ENCODE measurements at regions of chr4 and their contacts with region 1.

Region 1: DNA sequence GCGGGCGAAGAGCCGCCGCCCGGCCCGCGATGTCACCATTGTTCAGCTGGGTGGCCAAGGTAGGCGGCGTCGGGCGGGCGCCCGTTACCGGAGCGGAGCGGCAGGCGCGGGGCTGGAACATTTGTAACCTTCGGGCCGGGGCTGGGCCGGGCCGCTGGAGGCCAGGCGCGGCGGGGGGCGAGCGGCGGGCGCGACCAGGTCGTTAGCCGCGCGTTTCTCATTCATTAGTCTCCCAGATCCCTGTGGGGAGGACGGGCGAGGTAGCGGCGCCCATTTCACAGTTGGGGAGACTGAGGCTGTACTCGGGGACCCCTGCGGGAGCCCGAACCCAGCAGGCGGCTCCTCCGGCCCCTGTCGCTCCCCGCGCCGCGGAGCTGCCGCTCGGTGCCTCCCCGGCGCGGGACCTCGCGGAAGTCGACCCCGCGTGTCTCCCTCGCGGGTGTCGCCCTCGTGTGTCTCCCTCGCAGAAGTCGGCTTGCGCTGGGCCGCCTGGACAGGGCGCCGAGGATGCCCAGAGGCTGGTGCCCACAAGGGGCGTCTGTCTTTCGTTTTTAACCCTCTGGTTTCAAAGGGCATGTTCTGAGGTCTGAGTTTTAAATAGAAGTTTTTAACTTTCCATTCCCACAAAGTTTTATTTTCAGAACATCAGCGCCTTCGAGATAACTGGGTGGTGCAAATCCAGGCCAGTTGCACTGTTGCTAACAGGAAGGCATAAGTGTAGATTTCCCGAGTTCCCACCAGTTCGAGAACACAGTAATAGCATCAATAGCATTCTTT is 17.5 kb downstream of the PTTG2 start:
- DNase-seq: peak; percentile 51 to 65
- H3K4me3 ChIP-seq: peak overlapping the region; percentile 54
- H3K4me3 Mint-ChIP-seq: peak overlapping the region; percentile 71
- H3K27ac Mint-ChIP-seq: no peak overlapping the region
- H3K4me1 ChIP-seq: peaks cover 15% of the 10 kb centered on the region; the same call in 1 of the 2 replicates
- H3K4me1 Mint-ChIP-seq: peaks cover 12% of the 10 kb centered on the region
- H3K27me3 ChIP-seq: no peaks in the 10 kb centered on the region
- H3K27me3 Mint-ChIP-seq: no peaks in the 10 kb centered on the region
- CTCF ChIP-seq: peak; percentile 23 to 64

Region 2: DNA sequence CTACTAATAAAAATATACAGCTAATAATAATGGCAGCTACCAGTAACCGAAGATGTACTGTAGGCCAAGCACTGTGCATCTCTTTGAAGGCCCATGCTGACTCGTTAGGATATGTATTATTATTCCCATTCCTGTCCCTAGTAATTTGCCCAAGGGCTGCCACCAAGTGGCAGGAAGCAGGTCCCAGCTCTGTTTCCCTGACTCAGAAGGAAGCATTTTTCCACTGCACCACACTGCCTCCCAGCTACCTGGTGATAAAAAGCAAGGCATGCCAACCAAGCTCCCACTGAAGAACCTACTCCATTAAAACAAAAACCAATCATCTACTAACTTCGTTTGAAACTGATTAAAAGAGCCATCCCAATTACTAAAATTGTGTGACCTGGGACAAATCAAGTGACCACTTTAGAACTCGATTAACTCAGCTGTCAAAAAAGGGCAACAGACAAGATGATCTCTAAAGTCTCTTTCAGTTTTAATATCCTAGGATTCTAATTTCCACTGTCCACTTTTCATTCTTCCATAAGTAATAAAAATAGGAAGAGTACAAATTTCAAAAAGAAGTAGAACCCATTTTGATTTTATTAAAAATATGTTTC is 175.5 kb before region 1 on chr4:
- CTCF ChIA-PET with region 1: no interaction called
- POLR2A ChIA-PET with region 1: no interaction called
- intact Hi-C with region 1: loop called (anchors 5 kb)
- DNase-seq: peak; percentile 73 to 77
- H3K4me3 ChIP-seq: no peak overlapping the region
- H3K4me3 Mint-ChIP-seq: no peak overlapping the region
- H3K27ac Mint-ChIP-seq: no peak overlapping the region
- H3K4me1 ChIP-seq: no peaks in the 10 kb centered on the region
- H3K4me1 Mint-ChIP-seq: peaks cover 18% of the 10 kb centered on the region
- H3K27me3 ChIP-seq: no peaks in the 10 kb centered on the region
- H3K27me3 Mint-ChIP-seq: no peaks in the 10 kb centered on the region
- CTCF ChIP-seq: peak; percentile 59 to 80

Region 3: GRCh38 chr4:38015886-38016515 is 38.3 kb after region 1 on chr4:
- CTCF ChIA-PET with region 1: no interaction called
- POLR2A ChIA-PET with region 1: no interaction called
- intact Hi-C with region 1: no loop called
- DNase-seq: no peak
- H3K4me3 ChIP-seq: no peak overlapping the region
- H3K4me3 Mint-ChIP-seq: no peak overlapping the region
- H3K27ac Mint-ChIP-seq: no peak overlapping the region
- H3K4me1 ChIP-seq: no peaks in the 10 kb centered on the region
- H3K4me1 Mint-ChIP-seq: no peaks in the 10 kb centered on the region
- H3K27me3 ChIP-seq: no peaks in the 10 kb centered on the region
- H3K27me3 Mint-ChIP-seq: no peaks in the 10 kb centered on the region
- CTCF ChIP-seq: no peak

Region 4: DNA sequence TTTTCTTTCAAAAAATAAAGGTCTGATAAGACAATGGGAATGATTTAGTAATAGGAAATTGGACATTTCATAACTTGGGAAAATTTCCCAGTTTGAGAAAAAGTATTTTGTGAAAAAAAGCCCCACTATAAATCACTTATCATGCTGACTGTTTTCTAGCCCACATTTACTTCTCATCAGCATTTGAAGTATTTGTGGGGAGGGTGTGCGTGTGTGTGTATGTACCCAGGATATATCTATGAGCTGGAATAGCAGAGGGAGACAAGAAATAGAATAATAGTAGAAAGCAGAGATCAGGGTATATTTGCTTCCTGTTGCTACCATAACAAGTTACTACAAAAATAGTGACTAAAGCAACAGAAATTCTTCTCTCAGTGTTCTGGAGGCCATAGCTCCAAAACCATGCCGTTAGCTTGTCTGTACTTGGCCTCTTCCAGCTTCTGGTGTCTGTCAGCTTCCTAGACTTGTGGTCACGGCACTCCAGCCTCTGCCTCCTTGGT is 122.3 kb after region 1 on chr4:
- CTCF ChIA-PET with region 1: no interaction called
- POLR2A ChIA-PET with region 1: no interaction called
- intact Hi-C with region 1: no loop called
- DNase-seq: no peak
- H3K4me3 ChIP-seq: no peak overlapping the region
- H3K4me3 Mint-ChIP-seq: no peak overlapping the region
- H3K27ac Mint-ChIP-seq: no peak overlapping the region
- H3K4me1 ChIP-seq: no peaks in the 10 kb centered on the region
- H3K4me1 Mint-ChIP-seq: no peaks in the 10 kb centered on the region
- H3K27me3 ChIP-seq: no peaks in the 10 kb centered on the region
- H3K27me3 Mint-ChIP-seq: no peaks in the 10 kb centered on the region
- CTCF ChIP-seq: no peak